Dendritic cell treated with granulocyte-macrophage colony-stimulating factor and Interleukin-4, amounts not matched to agents 40 ng/mL and 50 ng/mL, for 4 days (primary cell): ENCODE measurements at regions of chr17 and their contacts with region 1.

Region 1: GRCh38 chr17:781805-782731 is at the starts of genes GLOD4 and MRM3:
- H3K4me3 Mint-ChIP-seq: peak within 1 kb of the TSS; percentile 96
- H3K27ac Mint-ChIP-seq: peak within 1 kb of the TSS; percentile 98
- H3K4me1 Mint-ChIP-seq: peaks cover 23% of the 10 kb centered on the region
- H3K27me3 Mint-ChIP-seq: no peaks in the 10 kb centered on the region

Region 2: DNA sequence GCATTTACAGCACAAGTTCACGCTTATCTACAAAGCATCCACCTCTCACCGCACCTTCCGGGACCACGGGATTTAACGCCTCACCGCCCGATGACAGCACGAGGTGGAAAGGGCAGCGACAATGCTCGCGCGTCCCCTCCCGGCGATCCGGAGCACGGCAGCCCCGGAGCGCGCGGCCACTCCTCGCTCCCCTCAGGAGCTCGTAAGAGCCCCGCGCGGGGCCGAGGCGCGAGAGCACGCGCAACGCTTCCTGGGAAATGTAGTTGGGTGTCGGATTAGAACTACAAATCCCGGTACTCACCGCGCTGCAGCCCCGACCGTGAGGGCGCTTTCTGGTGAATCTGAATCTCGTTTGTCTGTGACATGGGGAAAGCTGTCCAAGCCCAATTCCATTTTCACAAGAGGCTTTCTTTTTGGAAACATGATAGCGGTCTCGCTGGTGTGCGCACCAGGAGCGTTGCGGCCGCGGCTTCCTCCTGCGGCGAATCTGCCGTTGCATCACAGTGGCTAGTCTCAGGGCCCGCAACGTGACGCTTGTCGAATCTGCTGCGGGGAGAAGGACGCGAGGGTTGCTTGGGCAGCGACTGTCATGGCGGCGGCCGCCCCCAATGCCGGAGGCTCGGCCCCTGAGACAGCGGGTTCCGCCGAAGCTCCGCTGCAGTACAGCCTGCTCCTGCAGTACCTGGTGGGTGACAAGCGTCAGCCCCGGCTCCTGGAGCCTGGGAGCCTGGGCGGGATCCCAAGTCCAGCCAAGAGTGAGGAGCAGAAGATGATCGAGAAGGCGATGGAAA is 214.7 kb after region 1 on chr17 and contains the start of gene TIMM22:
- intact Hi-C with region 1: loop called (anchors 5 kb)
- H3K4me3 Mint-ChIP-seq: peak within 1 kb of the TSS; percentile 91
- H3K27ac Mint-ChIP-seq: peak within 1 kb of the TSS; percentile 98
- H3K4me1 Mint-ChIP-seq: peaks cover 19% of the 10 kb centered on the region
- H3K27me3 Mint-ChIP-seq: no peaks in the 10 kb centered on the region